MCF 10A (cell line): ENCODE measurements at regions of chr4 and their contacts with region 1.

Region 1: GRCh38 chr4:136793848-136794247 is 738.4 kb downstream of the PCDH18 start:
- DNase-seq: no peak
- H3K4me3 Mint-ChIP-seq: no peak overlapping the region
- H3K27ac Mint-ChIP-seq: no peak overlapping the region
- H3K4me1 Mint-ChIP-seq: no peaks in the 10 kb centered on the region
- H3K27me3 Mint-ChIP-seq: no peaks in the 10 kb centered on the region
- CTCF ChIP-seq: no peak

Region 2: DNA sequence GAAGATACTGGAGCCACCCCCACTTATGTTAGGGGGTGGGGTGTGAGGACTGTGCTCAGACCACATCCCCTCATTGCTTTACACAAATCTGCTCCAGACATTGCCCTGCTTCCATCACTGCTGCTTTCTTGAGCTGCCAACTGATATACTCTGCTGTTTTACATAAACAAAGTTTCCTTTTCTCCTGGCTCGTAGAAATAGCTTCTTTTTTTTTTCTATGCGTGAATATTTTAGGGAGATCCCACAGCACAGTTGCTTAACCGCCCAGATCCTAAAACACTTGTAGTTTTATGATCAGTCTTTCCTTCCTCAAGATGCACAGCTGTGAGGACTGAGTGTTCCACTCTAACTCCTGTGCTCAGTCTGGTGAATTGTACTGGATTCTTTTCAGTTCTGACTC is 29.9 kb before region 1 on chr4:
- CTCF ChIA-PET with region 1: no interaction called
- POLR2A ChIA-PET with region 1: no interaction called
- intact Hi-C with region 1: loop called (anchors 1 kb)
- DNase-seq: no peak
- H3K4me3 Mint-ChIP-seq: no peak overlapping the region
- H3K27ac Mint-ChIP-seq: no peak overlapping the region
- H3K4me1 Mint-ChIP-seq: no peaks in the 10 kb centered on the region
- H3K27me3 Mint-ChIP-seq: no peaks in the 10 kb centered on the region
- CTCF ChIP-seq: no peak

Region 3: GRCh38 chr4:136818811-136819330 is 25.0 kb after region 1 on chr4:
- CTCF ChIA-PET with region 1: no interaction called
- POLR2A ChIA-PET with region 1: no interaction called
- intact Hi-C with region 1: no loop called
- DNase-seq: no peak
- H3K4me3 Mint-ChIP-seq: no peak overlapping the region
- H3K27ac Mint-ChIP-seq: no peak overlapping the region
- H3K4me1 Mint-ChIP-seq: no peaks in the 10 kb centered on the region
- H3K27me3 Mint-ChIP-seq: no peaks in the 10 kb centered on the region
- CTCF ChIP-seq: no peak